ENCODE measurements at regions of chr1 and their contacts with region 1.

Region 1: GRCh38 chr1:112369392-112370285 is 26.4 kb upstream of the CTTNBP2NL start:
- DNase-seq: peak; percentile 86
- ATAC-seq: peak; percentile 100
- H3K4me3 Mint-ChIP-seq: no peak overlapping the region
- H3K27ac Mint-ChIP-seq: no peak overlapping the region
- H3K4me1 Mint-ChIP-seq: peaks cover 4% of the 10 kb centered on the region
- H3K27me3 Mint-ChIP-seq: peaks cover 34% of the 10 kb centered on the region

Region 2: GRCh38 chr1:112251766-112252506 is 117.7 kb before region 1 on chr1:
- CTCF ChIA-PET with region 1: no interaction called
- POLR2A ChIA-PET with region 1: no interaction called
- DNase-seq: no peak
- ATAC-seq: no peak
- H3K4me3 Mint-ChIP-seq: no peak overlapping the region
- H3K27ac Mint-ChIP-seq: no peak overlapping the region
- H3K4me1 Mint-ChIP-seq: no peaks in the 10 kb centered on the region
- H3K27me3 Mint-ChIP-seq: peaks cover 5% of the 10 kb centered on the region

Region 3: DNA sequence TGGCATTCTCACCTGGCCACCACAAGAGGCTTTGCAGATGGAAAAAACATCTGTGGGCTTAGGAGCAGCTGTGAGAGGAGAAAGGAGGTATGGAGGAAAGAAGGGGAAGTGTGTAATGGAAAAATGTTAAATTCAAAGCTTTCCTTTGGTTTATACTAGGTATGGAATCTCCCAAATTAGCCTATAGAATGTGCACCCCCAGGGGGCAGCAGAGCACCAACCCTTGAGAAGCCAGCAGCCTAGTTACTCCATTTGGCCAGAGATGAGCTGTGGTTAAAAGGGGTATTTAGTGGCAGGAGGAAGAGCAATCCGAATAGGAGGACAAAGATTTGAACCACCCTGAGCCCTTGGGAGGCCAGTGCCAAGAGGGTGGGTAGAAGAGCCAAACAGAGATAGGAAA is 71.1 kb before region 1 on chr1:
- CTCF ChIA-PET with region 1: interaction called, 27 read pairs
- POLR2A ChIA-PET with region 1: no interaction called
- DNase-seq: peak; percentile 37
- ATAC-seq: no peak
- H3K4me3 Mint-ChIP-seq: no peak overlapping the region
- H3K27ac Mint-ChIP-seq: no peak overlapping the region
- H3K4me1 Mint-ChIP-seq: no peaks in the 10 kb centered on the region
- H3K27me3 Mint-ChIP-seq: peaks cover 5% of the 10 kb centered on the region

Region 4: DNA sequence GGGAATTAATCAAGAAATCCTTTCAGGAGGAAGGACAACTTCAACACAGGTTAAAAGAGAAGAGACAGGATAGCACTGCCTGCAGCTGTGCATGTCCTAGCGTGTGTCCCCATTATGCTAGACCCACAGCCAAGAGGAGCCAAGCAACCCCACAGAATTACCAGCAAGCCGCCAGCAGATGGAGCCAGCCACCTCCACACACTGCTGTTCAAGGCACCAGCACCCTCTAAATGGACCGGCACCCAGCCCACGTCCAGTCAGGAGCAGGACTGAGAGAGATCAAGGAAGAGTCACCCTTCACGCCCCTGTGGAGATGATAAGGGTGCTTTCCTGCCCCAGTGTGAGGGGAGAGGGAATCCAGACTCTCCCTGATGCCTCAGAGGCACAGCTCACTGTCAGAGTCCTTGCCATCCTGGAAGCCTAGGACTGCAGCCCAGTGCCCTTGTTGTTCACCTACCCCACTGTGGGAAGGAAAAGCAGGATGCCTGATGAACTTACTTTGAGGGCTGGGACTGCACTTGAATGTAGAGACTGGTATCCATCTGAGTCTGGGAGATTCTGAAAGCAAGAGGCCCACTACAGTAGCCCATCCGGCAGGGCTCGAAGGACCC is 10.7 kb before region 1 on chr1:
- CTCF ChIA-PET with region 1: interaction called, 43 read pairs
- POLR2A ChIA-PET with region 1: interaction called, 3 read pairs
- DNase-seq: peak; percentile 50
- ATAC-seq: peak; percentile 79
- H3K4me3 Mint-ChIP-seq: no peak overlapping the region
- H3K27ac Mint-ChIP-seq: no peak overlapping the region
- H3K4me1 Mint-ChIP-seq: no peaks in the 10 kb centered on the region
- H3K27me3 Mint-ChIP-seq: peaks cover 7% of the 10 kb centered on the region

Region 5: DNA sequence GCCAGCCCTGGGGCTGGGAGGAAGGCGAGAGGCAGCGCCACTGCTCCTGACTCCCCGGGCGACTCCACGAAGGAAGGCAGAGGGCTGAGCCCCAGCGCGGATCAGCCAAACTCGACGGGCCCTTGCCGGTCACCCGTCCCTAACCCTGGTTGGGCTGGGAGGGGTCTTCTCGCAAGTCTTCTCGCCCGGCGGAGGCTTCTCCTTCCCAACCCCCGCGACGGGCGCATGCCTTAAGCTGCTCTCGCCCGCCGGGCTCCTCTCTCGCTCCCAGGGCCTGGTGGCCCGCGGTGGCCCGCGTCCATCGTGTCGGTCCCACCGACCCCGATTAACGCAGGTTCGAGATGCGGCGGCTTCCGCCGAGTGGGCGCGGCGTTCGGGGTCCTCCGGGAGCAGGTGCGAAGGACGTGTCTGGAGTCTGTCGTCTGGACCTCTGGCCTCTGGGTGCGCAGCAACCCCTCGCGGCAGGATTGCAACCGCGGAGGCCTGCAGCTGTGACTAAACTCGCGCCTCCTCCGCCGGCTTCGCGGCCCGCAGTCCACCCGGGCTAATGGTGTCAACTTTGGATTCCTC is 374.5 kb after region 1 on chr1:
- CTCF ChIA-PET with region 1: no interaction called
- POLR2A ChIA-PET with region 1: no interaction called
- DNase-seq: no peak
- ATAC-seq: no peak
- H3K4me3 Mint-ChIP-seq: no peak overlapping the region
- H3K27ac Mint-ChIP-seq: no peak overlapping the region
- H3K4me1 Mint-ChIP-seq: peaks cover 2% of the 10 kb centered on the region
- H3K27me3 Mint-ChIP-seq: peaks cover 57% of the 10 kb centered on the region